A549 (cell line): ENCODE measurements at regions of chr3 and their contacts with region 1.

Region 1: GRCh38 chr3:58491506-58492402 is at the start of gene KCTD6:
- DNase-seq: peak; percentile 56 to 91
- ATAC-seq: peak; percentile 90 to 96
- H3K4me3 ChIP-seq: peak within 1 kb of the TSS; percentile 83
- H3K27ac ChIP-seq: peak within 1 kb of the TSS; percentile 93
- H3K4me1 ChIP-seq: peaks cover 45% of the 10 kb centered on the region
- CTCF ChIP-seq: peak; percentile 81
- EP300 ChIP-seq: no peak
- POLR2A ChIP-seq: peak; percentile 6; the same call in 1 of the 2 replicates
- RAD21 ChIP-seq: peak; percentile 48 to 81
- polyA plus RNA-seq, gene KCTD6: 24.4 and 24.5 TPM in 2 replicates

Region 2: GRCh38 chr3:58329150-58329921 is 162.4 kb before region 1 on chr3:
- CTCF ChIA-PET with region 1: no interaction called
- POLR2A ChIA-PET with region 1: no interaction called
- DNase-seq: no peak
- ATAC-seq: no peak
- H3K4me3 ChIP-seq: no peak overlapping the region
- H3K27ac ChIP-seq: no peak overlapping the region
- H3K4me1 ChIP-seq: peaks cover 11% of the 10 kb centered on the region; the same call in 2 of the 3 replicates
- CTCF ChIP-seq: no peak
- EP300 ChIP-seq: no peak
- POLR2A ChIP-seq: no peak
- RAD21 ChIP-seq: no peak

Region 3: DNA sequence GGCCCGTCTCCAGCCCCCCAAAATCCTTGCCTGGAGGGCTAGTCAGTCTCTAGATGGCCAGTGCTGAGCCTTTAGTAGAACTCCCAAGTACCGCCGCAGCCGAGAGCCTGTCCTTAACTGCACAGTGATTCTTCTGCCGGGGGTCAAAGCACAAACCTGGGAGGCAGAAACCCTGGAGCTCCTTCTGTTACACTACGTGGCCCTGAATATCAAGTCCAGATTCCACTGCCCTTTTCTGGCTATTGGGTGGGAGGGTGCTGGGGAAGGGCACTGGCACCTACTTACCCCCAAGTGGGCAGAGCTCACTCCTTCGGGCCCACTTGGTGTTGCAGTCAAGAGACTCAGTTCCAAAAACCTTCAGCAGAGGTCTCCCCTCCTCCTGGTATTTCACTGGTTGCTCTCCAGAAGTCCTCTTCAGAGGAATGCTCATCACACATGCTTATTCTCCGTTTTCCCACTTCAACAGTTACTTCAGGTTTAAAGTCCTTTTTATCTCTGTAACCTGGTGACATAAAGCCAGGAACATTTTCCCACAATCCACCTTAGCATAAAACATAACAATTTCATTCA is 68.9 kb before region 1 on chr3:
- CTCF ChIA-PET with region 1: interaction called, 10 read pairs
- POLR2A ChIA-PET with region 1: no interaction called
- DNase-seq: peak; percentile 7 to 51
- ATAC-seq: peak; percentile 84 to 85
- H3K4me3 ChIP-seq: no peak overlapping the region
- H3K27ac ChIP-seq: no peak overlapping the region
- H3K4me1 ChIP-seq: no peaks in the 10 kb centered on the region
- CTCF ChIP-seq: peak; percentile 33
- EP300 ChIP-seq: no peak
- POLR2A ChIP-seq: no peak
- RAD21 ChIP-seq: peak; percentile 54 to 56

Region 4: DNA sequence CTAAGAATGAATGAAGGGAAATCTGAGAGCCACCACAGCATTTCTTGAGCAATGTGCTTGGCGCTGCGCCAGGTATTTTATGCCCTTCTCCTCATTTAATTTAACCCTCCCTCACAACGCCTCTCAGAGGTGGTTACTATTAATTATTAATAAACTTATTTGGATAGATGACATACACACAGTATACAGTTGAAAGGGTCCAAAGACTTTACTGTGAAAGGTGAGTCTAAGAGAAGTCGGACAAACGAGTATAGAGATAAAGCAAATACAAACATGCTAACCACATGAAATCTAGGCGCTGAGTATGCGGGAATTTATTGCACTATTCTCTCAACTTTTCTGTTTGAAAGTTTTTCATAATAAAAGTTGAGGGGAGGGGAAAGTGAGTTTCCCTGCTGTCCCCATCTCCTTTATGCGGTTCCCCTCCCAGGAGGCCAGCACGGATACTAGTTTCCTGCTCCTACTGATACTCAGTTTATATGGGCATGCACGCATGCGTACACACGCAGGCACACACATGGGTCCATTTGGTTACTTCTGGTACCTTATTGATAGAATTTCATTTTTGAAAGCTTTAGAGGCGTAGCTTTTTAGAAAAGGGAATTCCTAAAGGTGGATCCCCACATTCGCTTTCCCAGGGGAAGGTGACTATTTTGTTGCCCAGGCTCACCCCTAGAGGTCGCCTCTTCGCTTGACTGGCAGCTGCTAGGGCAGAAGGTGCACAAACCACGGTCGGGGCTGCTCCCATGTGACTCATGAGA is 28.4 kb before region 1 on chr3:
- CTCF ChIA-PET with region 1: interaction called, 24 read pairs
- POLR2A ChIA-PET with region 1: no interaction called
- DNase-seq: peak; percentile 86 to 87
- ATAC-seq: peak; percentile 98
- H3K4me3 ChIP-seq: peak overlapping the region; percentile 21; the same call in 1 of the 3 replicates
- H3K27ac ChIP-seq: peak overlapping the region; percentile 68 to 75
- H3K4me1 ChIP-seq: peaks cover 20% of the 10 kb centered on the region; the same call in 2 of the 3 replicates
- CTCF ChIP-seq: peak; percentile 81
- EP300 ChIP-seq: no peak
- POLR2A ChIP-seq: no peak
- RAD21 ChIP-seq: peak; percentile 76 to 79

Region 5: DNA sequence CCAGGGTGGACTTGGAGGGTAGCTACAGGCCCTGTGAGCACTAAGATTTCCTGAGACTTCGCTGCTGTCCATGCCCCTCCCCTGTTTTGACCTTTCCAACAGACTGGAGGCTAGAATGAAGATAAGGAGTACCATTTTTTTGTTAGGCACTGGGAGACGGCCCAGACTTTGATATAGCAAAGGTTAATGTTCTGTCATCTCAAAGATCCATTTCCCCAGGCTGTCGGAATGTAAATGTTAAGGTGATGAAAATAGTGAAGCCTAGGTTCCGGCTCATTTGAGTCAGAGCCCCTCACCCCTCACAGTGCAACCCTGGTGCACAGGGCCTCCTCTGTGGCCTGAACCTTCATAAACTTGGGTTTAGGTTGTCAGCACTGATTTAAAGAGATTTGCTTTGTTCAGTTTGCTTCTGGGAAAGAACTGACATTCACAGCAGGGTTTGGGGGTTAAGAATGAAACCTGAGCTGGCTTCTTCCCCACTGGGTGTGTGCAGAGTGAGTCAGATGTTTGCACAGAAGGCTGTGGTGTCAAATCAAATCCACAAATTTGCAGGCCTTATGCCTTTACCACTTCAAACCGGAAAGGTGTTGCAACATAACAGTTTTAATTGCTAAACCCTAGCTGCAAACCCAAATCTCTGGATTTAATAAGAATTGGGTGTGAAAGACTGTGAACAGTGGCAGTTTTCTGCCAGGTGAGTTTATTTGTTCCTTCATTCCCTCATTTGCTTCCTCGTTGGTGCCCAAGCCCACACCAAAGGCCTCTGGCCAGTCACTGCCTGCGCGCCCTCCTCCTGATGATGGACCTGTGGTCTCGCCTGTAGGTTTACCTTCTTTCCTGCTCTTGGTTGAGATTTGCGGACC is 20.5 kb before region 1 on chr3:
- CTCF ChIA-PET with region 1: interaction called, 23 read pairs
- POLR2A ChIA-PET with region 1: interaction called, 4 read pairs
- DNase-seq: peak; percentile 91 to 96
- ATAC-seq: peak; percentile 94 to 95
- H3K4me3 ChIP-seq: no peak overlapping the region
- H3K27ac ChIP-seq: peak overlapping the region; percentile 84 to 94
- H3K4me1 ChIP-seq: peaks cover 56% of the 10 kb centered on the region
- CTCF ChIP-seq: no peak
- EP300 ChIP-seq: peak; percentile 77 to 89; a peak in 4 of 5 replicates
- POLR2A ChIP-seq: no peak
- RAD21 ChIP-seq: peak; percentile 11 to 42; a peak in 2 of 5 replicates

Region 6: DNA sequence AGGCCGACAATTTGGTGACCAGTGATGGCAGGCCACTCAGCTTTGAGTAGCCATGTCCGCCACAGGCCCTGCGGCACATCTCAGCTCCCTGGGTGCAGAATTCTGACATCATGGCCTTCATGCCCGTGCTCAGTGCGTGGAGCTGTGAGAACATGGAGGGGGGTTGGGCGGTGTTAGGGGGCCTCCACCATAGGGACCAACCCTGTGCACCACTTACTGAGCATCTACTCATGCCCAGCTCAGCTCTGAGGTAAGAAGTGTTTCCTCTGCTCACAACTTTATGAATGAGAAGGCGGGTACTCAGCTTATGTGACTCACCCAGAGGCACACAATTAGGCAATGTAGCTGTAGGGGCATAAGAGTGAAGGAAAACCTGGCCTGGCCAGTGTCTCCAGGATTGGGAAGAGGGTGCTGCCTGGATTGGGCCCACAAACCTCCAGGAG is 34.8 kb after region 1 on chr3:
- CTCF ChIA-PET with region 1: interaction called, 20 read pairs
- POLR2A ChIA-PET with region 1: interaction called, 3 read pairs
- DNase-seq: peak; percentile 82 to 85
- ATAC-seq: peak; percentile 90 to 95
- H3K4me3 ChIP-seq: peak overlapping the region; percentile 26; the same call in 1 of the 3 replicates
- H3K27ac ChIP-seq: peak overlapping the region; percentile 69 to 85
- H3K4me1 ChIP-seq: peaks cover 34% of the 10 kb centered on the region
- CTCF ChIP-seq: no peak
- EP300 ChIP-seq: no peak
- POLR2A ChIP-seq: no peak
- RAD21 ChIP-seq: no peak

Region 7: GRCh38 chr3:58532794-58533220 is 41.1 kb after region 1 on chr3:
- CTCF ChIA-PET with region 1: interaction called, 12 read pairs
- POLR2A ChIA-PET with region 1: interaction called, 3 read pairs
- DNase-seq: peak; percentile 69 to 74
- ATAC-seq: peak; percentile 76 to 85; a peak in 5 of 6 replicates
- H3K4me3 ChIP-seq: no peak overlapping the region
- H3K27ac ChIP-seq: peak overlapping the region; percentile 30 to 64; a peak in 5 of 6 replicates
- H3K4me1 ChIP-seq: peaks cover 60% of the 10 kb centered on the region
- CTCF ChIP-seq: peak; percentile 80
- EP300 ChIP-seq: no peak
- POLR2A ChIP-seq: no peak
- RAD21 ChIP-seq: peak; percentile 85

Region 8: GRCh38 chr3:58633157-58633865 is 141.6 kb after region 1 on chr3:
- CTCF ChIA-PET with region 1: no interaction called
- POLR2A ChIA-PET with region 1: no interaction called
- DNase-seq: no peak
- ATAC-seq: no peak
- H3K4me3 ChIP-seq: no peak overlapping the region
- H3K27ac ChIP-seq: no peak overlapping the region
- H3K4me1 ChIP-seq: no peaks in the 10 kb centered on the region
- CTCF ChIP-seq: no peak
- EP300 ChIP-seq: no peak
- POLR2A ChIP-seq: no peak
- RAD21 ChIP-seq: no peak